Activated CD4-positive, alpha-beta T cell treated with anti-CD3 and anti-CD28 coated beads, Interleukin-2, amount 10 ng/mL, durations not matched to agents 7 days and 5 days (primary cell): ENCODE measurements at regions of chr1 and their contacts with region 1.

Region 1: DNA sequence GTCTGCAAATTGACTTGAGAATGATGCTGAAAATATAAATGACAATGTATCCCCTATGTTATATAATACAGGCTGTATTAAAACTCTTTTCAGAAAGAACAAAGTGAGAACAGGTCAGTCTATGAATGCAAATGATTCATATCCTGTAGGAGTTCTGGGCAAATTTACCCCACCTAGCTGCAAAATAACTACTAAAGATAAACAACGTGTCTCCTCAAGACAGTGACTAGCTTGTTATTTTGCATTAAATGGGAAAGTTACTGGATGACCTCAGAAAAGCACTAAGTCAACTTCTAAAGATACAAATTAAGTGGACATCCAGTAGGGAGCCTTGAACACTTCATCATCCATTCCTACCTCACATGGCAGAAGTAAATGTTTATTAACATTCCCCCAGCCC is 11.1 kb downstream of the RNF19B start:
- DNase-seq: no peak
- H3K4me3 Mint-ChIP-seq: no peak overlapping the region
- H3K27ac Mint-ChIP-seq: no peak overlapping the region
- H3K4me1 Mint-ChIP-seq: peaks cover 27% of the 10 kb centered on the region
- H3K27me3 Mint-ChIP-seq: no peaks in the 10 kb centered on the region

Region 2: DNA sequence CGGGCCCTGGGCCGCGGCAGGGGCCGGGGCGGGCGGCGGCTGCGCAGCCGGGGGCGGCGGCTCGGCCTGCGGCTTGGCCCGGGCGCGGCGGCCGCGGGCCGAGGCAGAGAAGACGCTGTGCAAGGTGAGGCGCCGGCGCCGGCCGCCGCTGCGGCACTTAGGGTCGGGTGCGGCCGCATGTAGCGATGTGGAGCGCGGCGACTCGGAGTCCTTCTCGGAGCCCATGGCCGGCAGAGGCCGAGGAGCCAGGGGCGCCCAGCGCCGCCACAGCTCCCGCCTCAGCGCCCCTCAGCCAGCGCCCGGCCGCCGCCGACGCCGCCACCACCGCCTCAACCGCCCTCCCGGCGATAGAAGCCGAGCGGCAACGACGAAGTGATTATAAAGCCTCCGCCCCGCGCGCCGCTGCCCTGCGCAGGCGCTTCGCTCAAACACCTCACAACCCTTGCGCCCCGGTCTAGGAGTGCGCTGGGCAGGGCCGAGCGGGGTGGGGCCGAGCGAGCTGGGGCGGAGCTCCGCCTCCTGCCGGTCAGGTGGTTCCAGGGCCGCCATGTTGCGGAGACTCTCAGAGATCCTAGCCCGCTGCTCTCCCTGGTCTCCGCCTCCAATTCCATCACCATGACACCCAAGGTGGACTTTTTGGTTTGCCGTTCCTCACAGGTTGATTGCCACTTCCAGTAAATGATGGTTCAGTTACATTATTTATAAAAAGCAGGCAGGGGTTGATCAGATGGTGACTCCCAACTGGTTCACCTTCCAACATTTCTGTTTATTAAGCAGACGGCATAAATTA is 11.2 kb after region 1 on chr1 and contains the start of gene RNF19B:
- CTCF ChIA-PET with region 1: interaction called, 10 read pairs
- POLR2A ChIA-PET with region 1: no interaction called
- DNase-seq: peak; percentile 95
- H3K4me3 Mint-ChIP-seq: peak within 1 kb of the TSS; percentile 86
- H3K27ac Mint-ChIP-seq: peak within 1 kb of the TSS; percentile 89
- H3K4me1 Mint-ChIP-seq: peaks cover 44% of the 10 kb centered on the region
- H3K27me3 Mint-ChIP-seq: no peaks in the 10 kb centered on the region
- total RNA-seq, gene RNF19B: 18.4 to 20.1 TPM